Gastrocnemius medialis (tissue), 4 donors: ENCODE measurements at regions of chr1 and their contacts with region 1.

Region 1: GRCh38 chr1:25616095-25616986 is at the start of gene MAN1C1:
- DNase-seq: peak; percentile 61 to 74
- ATAC-seq: peak; percentile 83 to 84
- H3K4me3 ChIP-seq: peak within 1 kb of the TSS; percentile 72 to 97 (median 90)
- H3K27ac ChIP-seq: peak within 1 kb of the TSS; percentile 81 to 92 (median 84)
- H3K4me1 ChIP-seq: peaks cover 20 to 26% of the 10 kb centered on the region in 2 donors
- H3K27me3 ChIP-seq: no peaks in the 10 kb centered on the region
- CTCF ChIP-seq: peak; percentile 49 to 62 (median 54)
- POLR2A ChIP-seq: peak; percentile 70 to 75
- total RNA-seq, gene MAN1C1: 2.0 to 4.4 (median 2.5) TPM

Region 2: GRCh38 chr1:25543425-25544242 is 72.7 kb before region 1 on chr1 and contains the start of gene LDLRAP1:
- in situ Hi-C with region 1: no loop called
- intact Hi-C with region 1: loop called (anchors 2 kb)
- DNase-seq: peak; percentile 48 to 68
- ATAC-seq: peak; percentile 88
- H3K4me3 ChIP-seq: peak within 1 kb of the TSS; percentile 76 to 95 (median 89)
- H3K27ac ChIP-seq: peak within 1 kb of the TSS; percentile 82 to 97 (median 93)
- H3K4me1 ChIP-seq: peaks cover 25 to 29% of the 10 kb centered on the region in 2 donors
- H3K27me3 ChIP-seq: no peaks in the 10 kb centered on the region
- CTCF ChIP-seq: no peak
- POLR2A ChIP-seq: peak; percentile 98 to 99
- total RNA-seq, gene LDLRAP1: 10.0 to 17.9 (median 14.2) TPM

Region 3: GRCh38 chr1:25556791-25557476 is 59.4 kb before region 1 on chr1:
- in situ Hi-C with region 1: no loop called
- intact Hi-C with region 1: no loop called
- DNase-seq: no peak
- ATAC-seq: no peak
- H3K4me3 ChIP-seq: no peak overlapping the region
- H3K27ac ChIP-seq: peak overlapping the region in 2 of 4 donors; percentile 12 to 53
- H3K4me1 ChIP-seq: peaks cover 39 to 49% of the 10 kb centered on the region in 2 donors
- H3K27me3 ChIP-seq: no peaks in the 10 kb centered on the region
- CTCF ChIP-seq: no peak
- POLR2A ChIP-seq: no peak

Region 4: GRCh38 chr1:25631750-25632485 is 15.6 kb after region 1 on chr1:
- in situ Hi-C with region 1: no loop called
- intact Hi-C with region 1: loop called (anchors 2 kb)
- DNase-seq: no peak
- ATAC-seq: peak; percentile 58 to 65
- H3K4me3 ChIP-seq: peak overlapping the region; percentile 19 to 37 (median 26)
- H3K27ac ChIP-seq: peak overlapping the region; percentile 39 to 62 (median 54)
- H3K4me1 ChIP-seq: peaks cover 7 to 14% of the 10 kb centered on the region in 2 donors
- H3K27me3 ChIP-seq: no peaks in the 10 kb centered on the region
- CTCF ChIP-seq: no peak
- POLR2A ChIP-seq: no peak

Region 5: DNA sequence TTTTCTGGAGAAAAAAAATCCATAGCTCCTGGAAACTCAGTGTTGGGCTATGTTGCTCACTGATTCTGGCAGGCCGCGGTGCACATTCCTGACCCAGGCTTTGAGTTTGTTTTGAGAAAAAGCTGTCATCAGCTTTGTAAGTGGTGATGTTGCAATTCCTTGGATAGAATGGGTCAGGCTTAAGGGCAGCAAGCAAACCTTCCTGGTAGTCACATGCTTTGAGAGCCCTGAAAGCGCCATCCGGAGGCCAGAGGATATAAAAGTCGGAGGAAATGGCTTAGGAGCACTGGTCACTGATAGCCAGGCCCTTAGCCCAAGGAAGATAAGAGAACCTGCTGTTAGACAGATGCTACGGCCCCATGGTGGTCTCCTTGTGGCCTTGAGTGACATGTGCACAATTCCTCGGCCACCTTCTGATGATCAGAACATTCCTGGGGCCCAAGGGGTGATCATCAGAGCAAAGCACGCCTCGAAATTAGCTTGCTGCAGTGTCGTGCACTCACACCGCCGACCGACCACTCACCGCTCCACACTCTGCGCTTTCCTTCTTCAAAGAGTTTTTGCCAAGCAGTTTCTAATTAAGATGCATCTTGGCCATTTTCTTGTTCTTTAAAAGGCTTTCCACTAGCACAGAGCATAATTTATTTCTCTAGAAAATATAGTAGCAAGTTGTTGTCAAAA is 78.9 kb after region 1 on chr1:
- in situ Hi-C with region 1: no loop called
- intact Hi-C with region 1: loop called (anchors 2 kb)
- DNase-seq: peak; percentile 75 to 85
- ATAC-seq: peak; percentile 75 to 77
- H3K4me3 ChIP-seq: no peak overlapping the region
- H3K27ac ChIP-seq: peak overlapping the region; percentile 48 to 76 (median 70)
- H3K4me1 ChIP-seq: peaks cover 40 to 44% of the 10 kb centered on the region in 2 donors
- H3K27me3 ChIP-seq: no peaks in the 10 kb centered on the region
- CTCF ChIP-seq: peak in 1 of 5 experiments; percentile 20
- POLR2A ChIP-seq: no peak

Region 6: DNA sequence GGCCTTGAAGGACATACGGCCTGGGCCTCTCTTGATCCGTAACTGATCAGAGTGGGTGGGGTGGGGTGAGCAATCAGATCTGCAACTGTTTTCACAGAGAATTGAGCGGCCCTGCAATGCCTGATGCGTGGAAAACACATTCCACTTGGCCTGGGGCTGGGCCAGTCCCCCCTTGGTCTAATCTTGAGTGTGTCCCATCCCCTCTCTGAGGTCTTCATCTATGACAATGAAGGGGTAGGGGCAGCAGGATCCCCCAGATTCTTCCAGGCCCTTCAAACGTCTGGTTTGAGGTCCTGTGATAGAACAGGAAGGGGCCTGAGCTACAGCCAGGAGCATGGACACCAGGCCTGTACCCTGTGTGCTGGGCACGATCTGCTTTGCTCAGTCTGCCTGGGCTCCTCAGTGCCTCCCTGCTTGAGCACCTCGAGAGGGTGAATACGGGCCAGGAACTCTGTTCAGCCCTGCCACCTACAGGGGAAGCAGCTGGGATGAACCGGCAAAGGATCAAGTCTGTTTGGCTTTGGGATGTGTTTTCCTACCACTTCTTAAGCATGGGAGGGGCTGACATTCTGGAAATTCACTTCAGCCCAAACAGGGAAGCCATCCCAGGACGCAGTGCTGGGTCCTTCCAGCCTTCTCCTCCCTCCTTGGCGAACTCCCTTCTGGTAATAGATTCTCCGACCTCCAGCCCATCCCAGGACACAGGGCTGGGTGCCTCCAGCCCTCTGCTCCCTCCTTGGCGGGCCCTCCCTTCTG is 127.7 kb after region 1 on chr1:
- in situ Hi-C with region 1: loop called in 1 of 4 experiments (anchors 25 kb)
- intact Hi-C with region 1: loop called (anchors 1 kb)
- DNase-seq: peak; percentile 73 to 86
- ATAC-seq: peak; percentile 86 to 88
- H3K4me3 ChIP-seq: no peak overlapping the region
- H3K27ac ChIP-seq: peak overlapping the region; percentile 90 to 95 (median 94)
- H3K4me1 ChIP-seq: peaks cover 31 to 32% of the 10 kb centered on the region in 2 donors
- H3K27me3 ChIP-seq: no peaks in the 10 kb centered on the region
- CTCF ChIP-seq: peak; percentile 42 to 65 (median 55)
- POLR2A ChIP-seq: no peak

Region 7: GRCh38 chr1:25805863-25806225 is 189.5 kb after region 1 on chr1:
- in situ Hi-C with region 1: loop called in 1 of 4 experiments (anchors 5 kb)
- intact Hi-C with region 1: loop called (anchors 2 kb)
- DNase-seq: peak; percentile 57 to 80
- ATAC-seq: peak; percentile 70 to 76
- H3K4me3 ChIP-seq: no peak overlapping the region
- H3K27ac ChIP-seq: peak overlapping the region; percentile 79 to 85 (median 82)
- H3K4me1 ChIP-seq: peaks cover 60% of the 10 kb centered on the region in 2 donors
- H3K27me3 ChIP-seq: no peaks in the 10 kb centered on the region
- CTCF ChIP-seq: no peak
- POLR2A ChIP-seq: no peak